ENCODE measurements at regions of chr15 and their contacts with region 1.

Region 1: DNA sequence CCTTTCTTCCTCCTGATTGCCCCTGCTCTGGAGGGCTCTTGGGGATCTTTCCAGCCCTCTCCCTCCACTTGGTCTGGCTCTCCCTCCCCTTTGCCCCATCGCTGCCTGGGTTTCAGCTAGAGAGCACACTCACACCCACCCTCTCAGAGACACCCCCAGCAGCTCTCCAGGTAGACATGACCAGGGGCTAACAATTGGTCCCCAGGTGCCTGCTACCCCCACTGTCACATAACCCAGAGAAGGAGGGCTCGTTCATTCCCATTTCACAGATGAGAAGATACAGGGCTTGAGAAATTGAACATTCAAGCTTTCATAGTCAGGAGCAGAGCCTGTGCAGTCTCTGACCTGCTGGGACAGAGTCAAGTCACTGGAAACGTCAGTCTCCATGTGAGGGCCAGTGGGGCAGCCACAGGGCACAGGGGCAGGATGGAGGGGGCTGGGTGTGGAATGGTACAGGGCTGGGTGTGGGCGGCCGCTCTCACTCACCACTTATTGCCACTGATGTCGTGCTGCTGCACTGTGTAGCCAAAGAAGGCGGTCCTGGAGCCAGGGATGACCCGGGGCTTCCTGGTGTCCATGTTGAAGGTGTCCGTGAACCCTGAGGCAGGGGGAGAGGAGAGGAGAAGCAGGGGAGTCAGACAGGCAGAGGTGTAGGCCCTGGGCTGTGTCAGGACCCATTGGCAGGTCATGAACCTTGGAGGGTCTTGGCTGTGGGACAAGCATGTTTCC is 29.4 kb downstream of the ITGA11 start:
- DNase-seq: no peak
- H3K4me3 Mint-ChIP-seq: no peak overlapping the region
- H3K27ac Mint-ChIP-seq: no peak overlapping the region
- H3K4me1 Mint-ChIP-seq: no peaks in the 10 kb centered on the region
- H3K27me3 Mint-ChIP-seq: peaks cover 1% of the 10 kb centered on the region

Region 2: GRCh38 chr15:67998599-67999122 is 403.9 kb before region 1 on chr15:
- intact Hi-C with region 1: no loop called
- DNase-seq: no peak
- H3K4me3 Mint-ChIP-seq: no peak overlapping the region
- H3K27ac Mint-ChIP-seq: no peak overlapping the region
- H3K4me1 Mint-ChIP-seq: no peaks in the 10 kb centered on the region
- H3K27me3 Mint-ChIP-seq: no peaks in the 10 kb centered on the region

Region 3: DNA sequence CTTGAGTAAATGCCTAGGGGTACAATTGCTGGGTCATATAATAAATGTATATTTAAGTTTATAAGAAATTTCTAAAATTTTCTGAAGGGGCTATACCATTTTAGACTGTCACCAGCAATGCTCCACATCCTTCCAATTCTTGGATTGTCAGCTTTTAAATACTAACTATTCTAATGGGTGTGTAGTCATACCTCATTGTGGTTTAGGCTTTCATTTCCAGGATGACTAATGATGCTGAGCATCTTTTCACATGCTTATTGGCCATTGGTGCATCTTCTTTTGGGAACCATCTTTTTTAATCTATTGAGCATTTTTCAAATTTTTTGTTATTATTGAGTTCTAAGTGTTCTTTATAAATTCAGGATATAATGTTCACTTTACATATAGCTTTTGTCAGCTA is 123.7 kb after region 1 on chr15:
- intact Hi-C with region 1: loop called (anchors 5 kb)
- DNase-seq: no peak
- H3K4me3 Mint-ChIP-seq: no peak overlapping the region
- H3K27ac Mint-ChIP-seq: no peak overlapping the region
- H3K4me1 Mint-ChIP-seq: peaks cover 35% of the 10 kb centered on the region
- H3K27me3 Mint-ChIP-seq: peaks cover 28% of the 10 kb centered on the region